ENCODE measurements at regions of chr6 and their contacts with region 1.

Region 1: DNA sequence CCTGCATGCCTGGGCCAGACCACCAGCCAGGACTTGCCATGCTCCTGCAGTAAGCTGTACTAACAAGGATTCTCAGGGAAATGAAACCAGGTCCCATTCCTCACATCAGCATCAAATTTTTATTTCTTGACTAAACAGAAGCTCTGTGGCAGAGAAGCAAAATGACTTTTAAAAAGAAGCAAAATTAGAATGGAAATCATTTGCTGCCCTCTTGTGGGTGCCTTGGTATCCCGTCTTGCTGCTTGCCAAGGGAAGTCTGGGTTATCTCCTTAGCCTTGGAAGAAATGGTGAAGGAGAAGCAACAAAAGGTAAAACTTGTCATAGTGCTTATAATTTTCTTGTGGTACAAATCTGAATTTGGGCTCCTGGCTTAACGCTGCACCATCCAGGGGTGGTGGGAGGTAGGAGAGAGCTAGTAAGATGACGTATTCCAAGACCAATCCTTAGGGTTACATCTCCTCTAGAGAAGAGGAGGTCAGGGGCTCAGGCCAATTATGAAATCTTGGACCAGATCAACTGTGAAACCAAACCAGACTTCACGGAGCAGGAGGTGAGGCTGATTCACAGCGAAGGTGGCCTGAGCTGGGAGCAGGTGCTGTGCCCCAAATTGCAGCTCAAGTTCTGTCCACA is 107.5 kb downstream of the FAXC start:
- DNase-seq: peak in 1 of 2 experiments; percentile 61
- H3K4me3 ChIP-seq: no peak overlapping the region
- H3K27ac ChIP-seq: no peak overlapping the region
- H3K4me1 ChIP-seq: no peaks in the 10 kb centered on the region
- H3K27me3 ChIP-seq: no peaks in the 10 kb centered on the region
- CTCF ChIP-seq: peak in 2 of 3 experiments; percentile 56 to 69; a peak in 2 of 4 replicates
- EP300 ChIP-seq: no peak
- POLR2A ChIP-seq: no peak
- RAD21 ChIP-seq: peak; percentile 83 to 86

Region 2: GRCh38 chr6:98904096-98904495 is 337.9 kb before region 1 on chr6:
- CTCF ChIA-PET with region 1: no interaction called
- POLR2A ChIA-PET with region 1: no interaction called
- DNase-seq: no peak
- H3K4me3 ChIP-seq: no peak overlapping the region
- H3K27ac ChIP-seq: no peak overlapping the region
- H3K4me1 ChIP-seq: no peaks in the 10 kb centered on the region
- H3K27me3 ChIP-seq: no peaks in the 10 kb centered on the region
- CTCF ChIP-seq: no peak
- EP300 ChIP-seq: no peak
- POLR2A ChIP-seq: no peak
- RAD21 ChIP-seq: no peak

Region 3: GRCh38 chr6:99110029-99110428 is 132.0 kb before region 1 on chr6:
- CTCF ChIA-PET with region 1: interaction called, 10 read pairs
- POLR2A ChIA-PET with region 1: no interaction called
- DNase-seq: no peak
- H3K4me3 ChIP-seq: no peak overlapping the region
- H3K27ac ChIP-seq: no peak overlapping the region
- H3K4me1 ChIP-seq: no peaks in the 10 kb centered on the region
- H3K27me3 ChIP-seq: no peaks in the 10 kb centered on the region
- CTCF ChIP-seq: no peak
- EP300 ChIP-seq: no peak
- POLR2A ChIP-seq: no peak
- RAD21 ChIP-seq: no peak

Region 4: DNA sequence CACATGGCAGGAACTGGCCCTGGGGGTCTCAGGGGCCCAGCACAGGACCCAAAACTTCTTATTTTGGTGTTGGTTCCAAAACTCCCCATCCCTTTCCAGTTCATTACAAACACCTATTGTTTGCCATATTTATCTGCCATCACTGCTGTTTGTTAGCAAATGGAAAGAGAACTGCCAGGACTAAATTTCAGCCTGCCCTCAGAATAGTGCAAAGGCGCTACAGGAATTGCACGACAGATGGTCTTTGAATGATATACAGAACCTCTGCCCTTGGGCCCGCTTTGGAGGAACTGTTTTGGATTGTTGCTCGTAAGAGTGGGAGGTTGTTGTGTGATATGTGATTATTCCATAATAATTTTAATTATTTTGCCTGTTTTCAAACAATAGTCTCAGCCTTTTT is 95.3 kb before region 1 on chr6:
- CTCF ChIA-PET with region 1: interaction called, 167 read pairs
- POLR2A ChIA-PET with region 1: interaction called, 5 read pairs
- DNase-seq: no peak
- H3K4me3 ChIP-seq: no peak overlapping the region
- H3K27ac ChIP-seq: no peak overlapping the region
- H3K4me1 ChIP-seq: peaks cover 0 to 6% (median 0%) of the 10 kb centered on the region in 4 experiments; a peak in 1 of 7 replicates
- H3K27me3 ChIP-seq: no peaks in the 10 kb centered on the region
- CTCF ChIP-seq: no peak
- EP300 ChIP-seq: no peak
- POLR2A ChIP-seq: no peak
- RAD21 ChIP-seq: no peak

Region 5: GRCh38 chr6:99225172-99225571 is 16.8 kb before region 1 on chr6:
- CTCF ChIA-PET with region 1: interaction called, 45 read pairs
- POLR2A ChIA-PET with region 1: no interaction called
- DNase-seq: no peak
- H3K4me3 ChIP-seq: no peak overlapping the region
- H3K27ac ChIP-seq: no peak overlapping the region
- H3K4me1 ChIP-seq: peaks cover 0 to 2% (median 0%) of the 10 kb centered on the region in 4 experiments; a peak in 2 of 7 replicates
- H3K27me3 ChIP-seq: no peaks in the 10 kb centered on the region
- CTCF ChIP-seq: no peak
- EP300 ChIP-seq: no peak
- POLR2A ChIP-seq: no peak
- RAD21 ChIP-seq: no peak

Region 6: DNA sequence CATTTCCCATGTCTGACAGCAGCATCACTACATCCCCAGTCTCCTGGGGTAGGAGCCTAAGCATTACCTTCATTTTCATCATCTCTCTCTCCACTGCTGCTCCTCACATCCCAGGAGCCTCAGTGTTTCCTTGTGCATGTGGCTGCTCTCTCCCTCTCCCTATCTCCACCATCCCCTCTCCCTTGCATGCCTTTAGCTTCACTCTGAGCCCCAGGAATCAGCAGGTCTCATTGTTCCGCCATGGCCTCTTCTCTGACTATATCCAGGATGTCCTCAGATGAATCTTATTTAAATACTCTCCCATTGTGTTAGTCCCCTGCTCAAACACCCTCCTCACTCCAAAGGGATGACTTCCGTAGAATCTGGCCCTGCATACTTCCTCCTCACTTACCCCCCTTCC is 28.0 kb after region 1 on chr6:
- CTCF ChIA-PET with region 1: interaction called, 13 read pairs
- POLR2A ChIA-PET with region 1: no interaction called
- DNase-seq: no peak
- H3K4me3 ChIP-seq: no peak overlapping the region
- H3K27ac ChIP-seq: no peak overlapping the region
- H3K4me1 ChIP-seq: peaks cover 2 to 4% (median 2%) of the 10 kb centered on the region in 4 experiments; a peak in 5 of 7 replicates
- H3K27me3 ChIP-seq: no peaks in the 10 kb centered on the region
- CTCF ChIP-seq: no peak
- EP300 ChIP-seq: no peak
- POLR2A ChIP-seq: no peak
- RAD21 ChIP-seq: no peak

Region 7: GRCh38 chr6:99330159-99330558 is 88.1 kb after region 1 on chr6:
- CTCF ChIA-PET with region 1: no interaction called
- POLR2A ChIA-PET with region 1: no interaction called
- DNase-seq: no peak
- H3K4me3 ChIP-seq: no peak overlapping the region
- H3K27ac ChIP-seq: no peak overlapping the region
- H3K4me1 ChIP-seq: peaks cover 0 to 4% (median 1%) of the 10 kb centered on the region in 4 experiments; a peak in 3 of 7 replicates
- H3K27me3 ChIP-seq: no peaks in the 10 kb centered on the region
- CTCF ChIP-seq: peak; percentile 43 to 79 (median 63)
- EP300 ChIP-seq: no peak
- POLR2A ChIP-seq: no peak
- RAD21 ChIP-seq: peak; percentile 74 to 75